Left ventricle myocardium superior (tissue), 1 donor: ENCODE measurements at regions of chr1 and their contacts with region 1.

Region 1: GRCh38 chr1:170967042-170967910 is 31.9 kb downstream of the MROH9 start:
- DNase-seq: no peak
- ATAC-seq: peak; percentile 61

Region 2: GRCh38 chr1:171226747-171227370 is 259.6 kb after region 1 on chr1:
- intact Hi-C with region 1: loop called (anchors 1 kb)
- DNase-seq: no peak
- ATAC-seq: peak; percentile 81

Region 3: DNA sequence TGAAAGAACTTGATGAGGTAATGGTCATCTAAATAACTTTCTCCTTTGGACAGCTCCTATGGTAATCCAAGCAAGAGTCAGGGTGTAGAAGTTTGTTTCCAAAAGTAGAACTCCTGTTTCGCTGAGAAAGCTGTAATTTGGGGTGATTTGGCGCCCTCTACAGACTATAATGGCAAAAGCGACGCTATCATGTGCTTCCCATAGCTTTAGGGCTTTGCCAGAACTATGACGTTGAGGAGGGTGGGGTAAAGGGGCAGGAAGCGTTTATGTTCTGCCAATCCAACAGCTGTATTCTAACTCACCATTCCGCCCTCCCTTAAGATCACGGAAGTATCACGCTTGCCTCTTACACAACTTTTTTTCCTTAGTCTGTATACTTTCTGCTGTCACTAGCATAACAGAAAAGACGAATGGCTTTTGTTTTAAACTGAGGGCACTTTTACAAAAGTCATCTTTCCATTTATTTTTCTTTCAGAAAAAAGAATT is 346.6 kb after region 1 on chr1 and contains the start of gene FMO4:
- intact Hi-C with region 1: loop called (anchors 10 kb)
- DNase-seq: peak; percentile 53
- ATAC-seq: peak; percentile 100
- total RNA-seq, gene FMO4: 2.2 TPM